Activated CD4-positive, alpha-beta T cell treated with anti-CD3 and anti-CD28 coated beads, Interleukin-2, amount 10 ng/mL, durations not matched to agents 7 days and 5 days (primary cell): ENCODE measurements at regions of chr14 and their contacts with region 1.

Region 1: DNA sequence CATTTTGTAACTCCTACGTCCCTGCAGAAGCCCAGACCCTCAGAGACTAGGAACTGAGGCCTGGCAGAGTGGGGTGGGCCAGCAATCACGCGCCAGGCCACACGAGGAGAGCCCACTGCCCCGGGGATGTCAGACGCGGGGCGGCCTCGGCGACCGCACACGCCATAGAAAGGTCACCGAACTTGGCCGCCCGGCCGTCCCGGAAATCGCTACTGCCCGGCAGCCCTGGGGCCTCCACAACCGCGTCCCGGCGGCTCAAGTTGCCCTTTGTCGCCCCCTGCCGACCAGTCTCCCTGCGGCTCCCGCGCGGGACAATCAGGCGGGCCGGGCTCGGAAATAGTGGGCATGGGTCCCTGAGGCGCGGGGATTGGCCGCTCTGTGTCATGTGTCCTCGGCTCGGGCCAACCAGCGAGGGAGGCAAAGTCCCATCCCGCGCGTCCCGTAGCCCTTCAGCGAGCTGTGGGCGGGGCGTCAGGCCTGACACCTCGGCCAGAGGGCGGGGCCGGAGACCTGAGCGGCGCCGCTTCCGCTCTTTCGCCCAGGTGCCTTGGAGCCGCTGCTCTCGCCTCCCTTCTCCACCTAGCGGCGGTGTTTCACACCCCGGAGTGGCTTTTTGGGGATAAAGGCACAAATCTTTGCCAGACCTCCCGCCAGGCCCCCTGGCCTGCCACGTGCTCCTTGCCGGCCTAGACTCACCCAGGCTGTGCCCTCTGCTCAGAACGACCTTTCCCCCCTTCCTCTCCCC is 33.4 kb upstream of the DEGS2 start:
- DNase-seq: peak; percentile 100
- H3K4me3 Mint-ChIP-seq: peak overlapping the region; percentile 59
- H3K27ac Mint-ChIP-seq: peak overlapping the region; percentile 95
- H3K4me1 Mint-ChIP-seq: peaks cover 12% of the 10 kb centered on the region
- H3K27me3 Mint-ChIP-seq: no peaks in the 10 kb centered on the region

Region 2: GRCh38 chr14:99976666-99977065 is 216.2 kb before region 1 on chr14:
- CTCF ChIA-PET with region 1: interaction called, 12 read pairs
- POLR2A ChIA-PET with region 1: no interaction called
- DNase-seq: no peak
- H3K4me3 Mint-ChIP-seq: no peak overlapping the region
- H3K27ac Mint-ChIP-seq: no peak overlapping the region
- H3K4me1 Mint-ChIP-seq: peaks cover 15% of the 10 kb centered on the region
- H3K27me3 Mint-ChIP-seq: no peaks in the 10 kb centered on the region

Region 3: DNA sequence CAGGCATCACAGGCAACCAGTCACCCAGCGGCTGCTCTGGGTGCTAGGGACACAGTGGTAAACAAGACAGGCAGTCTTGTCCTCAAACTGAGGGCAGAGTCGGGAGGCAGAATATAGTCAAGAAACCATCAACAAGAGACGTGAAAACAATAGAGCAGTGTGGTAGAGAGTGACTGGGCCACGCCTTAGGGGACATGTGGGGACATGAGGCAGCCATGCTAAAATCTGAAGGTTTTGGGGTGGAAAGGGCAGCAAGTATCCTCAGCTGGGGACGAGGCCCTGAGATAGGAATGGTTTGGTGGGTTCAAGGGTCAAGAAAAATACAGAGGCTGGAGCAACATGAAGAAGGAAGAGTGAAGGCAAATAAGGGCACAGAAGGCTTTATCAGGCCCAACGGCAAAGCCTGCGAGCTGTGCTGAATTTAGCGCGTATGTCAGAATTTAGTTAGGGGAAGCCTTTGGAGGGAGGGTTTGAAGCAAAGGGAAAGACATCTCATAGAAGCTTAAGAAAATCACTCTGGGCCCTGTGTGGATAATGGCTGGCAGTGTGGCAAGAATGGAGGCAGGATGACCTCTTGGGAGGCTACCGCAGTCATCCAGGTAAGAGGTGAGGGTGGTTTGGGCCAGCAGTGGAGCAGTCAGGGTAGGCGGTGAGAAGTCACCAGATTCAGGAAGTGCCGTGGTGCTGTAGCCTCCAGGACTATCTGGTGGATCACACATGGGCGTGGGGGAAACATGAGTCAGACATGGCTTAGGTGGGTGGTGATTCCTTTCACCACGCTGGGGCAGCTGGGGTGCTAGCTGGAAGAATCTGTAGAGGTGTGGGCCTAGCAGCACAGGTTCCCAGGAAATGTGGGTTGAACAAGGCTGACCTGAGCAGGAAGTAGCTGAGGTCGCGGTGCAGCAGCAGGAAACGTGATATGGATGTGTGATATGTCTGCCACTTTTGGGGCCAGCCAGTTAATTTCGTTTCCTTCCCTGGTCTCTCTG is 124.6 kb before region 1 on chr14:
- CTCF ChIA-PET with region 1: interaction called, 27 read pairs
- POLR2A ChIA-PET with region 1: no interaction called
- DNase-seq: peak; percentile 92
- H3K4me3 Mint-ChIP-seq: peak overlapping the region; percentile 92
- H3K27ac Mint-ChIP-seq: peak overlapping the region; percentile 98
- H3K4me1 Mint-ChIP-seq: peaks cover 41% of the 10 kb centered on the region
- H3K27me3 Mint-ChIP-seq: no peaks in the 10 kb centered on the region

Region 4: DNA sequence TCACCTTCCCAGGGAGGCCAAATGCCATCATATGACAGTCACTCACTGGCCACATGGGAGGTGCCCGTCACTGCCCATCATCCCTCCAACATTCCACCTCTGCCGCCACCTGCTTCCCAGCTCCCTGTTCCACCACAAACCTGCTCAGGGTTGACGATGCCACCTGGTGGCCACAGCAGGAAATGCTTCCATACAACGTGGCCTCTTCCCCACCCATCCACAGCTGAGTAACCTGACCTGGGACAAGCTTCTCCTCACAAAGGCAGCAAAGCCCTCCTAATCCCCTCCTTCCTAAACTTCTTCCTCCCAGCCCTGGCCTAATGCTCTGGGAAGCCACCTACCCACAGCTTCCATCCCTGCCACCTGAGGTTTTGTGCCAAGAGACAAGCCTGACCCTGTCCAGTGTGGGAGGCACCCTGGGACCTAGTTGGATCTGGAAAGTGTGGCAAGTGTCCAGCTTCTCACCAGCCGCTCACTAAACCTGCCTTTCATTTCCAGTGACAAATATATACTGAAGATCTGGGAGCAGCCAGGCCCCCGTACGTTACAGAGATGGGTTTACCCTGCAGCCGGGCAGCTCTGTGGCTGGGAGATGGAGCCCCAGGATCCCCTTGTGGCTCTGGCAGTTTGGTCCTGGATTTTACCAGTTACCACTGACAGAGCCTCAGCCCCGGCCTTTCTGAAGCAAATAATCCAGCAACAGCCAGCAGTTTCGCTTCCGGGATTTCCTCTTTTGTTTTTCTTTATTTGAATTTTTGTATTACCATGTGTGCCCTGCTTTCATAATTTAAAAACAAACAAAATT is 37.6 kb before region 1 on chr14:
- CTCF ChIA-PET with region 1: interaction called, 16 read pairs
- POLR2A ChIA-PET with region 1: interaction called, 3 read pairs
- DNase-seq: no peak
- H3K4me3 Mint-ChIP-seq: no peak overlapping the region
- H3K27ac Mint-ChIP-seq: peak overlapping the region; percentile 46
- H3K4me1 Mint-ChIP-seq: peaks cover 4% of the 10 kb centered on the region
- H3K27me3 Mint-ChIP-seq: peaks cover 31% of the 10 kb centered on the region

Region 5: GRCh38 chr14:100213956-100214774 is 21.3 kb after region 1 on chr14:
- CTCF ChIA-PET with region 1: interaction called, 55 read pairs
- POLR2A ChIA-PET with region 1: no interaction called
- DNase-seq: peak; percentile 91
- H3K4me3 Mint-ChIP-seq: peak overlapping the region; percentile 80
- H3K27ac Mint-ChIP-seq: peak overlapping the region; percentile 93
- H3K4me1 Mint-ChIP-seq: peaks cover 45% of the 10 kb centered on the region
- H3K27me3 Mint-ChIP-seq: peaks cover 3% of the 10 kb centered on the region

Region 6: DNA sequence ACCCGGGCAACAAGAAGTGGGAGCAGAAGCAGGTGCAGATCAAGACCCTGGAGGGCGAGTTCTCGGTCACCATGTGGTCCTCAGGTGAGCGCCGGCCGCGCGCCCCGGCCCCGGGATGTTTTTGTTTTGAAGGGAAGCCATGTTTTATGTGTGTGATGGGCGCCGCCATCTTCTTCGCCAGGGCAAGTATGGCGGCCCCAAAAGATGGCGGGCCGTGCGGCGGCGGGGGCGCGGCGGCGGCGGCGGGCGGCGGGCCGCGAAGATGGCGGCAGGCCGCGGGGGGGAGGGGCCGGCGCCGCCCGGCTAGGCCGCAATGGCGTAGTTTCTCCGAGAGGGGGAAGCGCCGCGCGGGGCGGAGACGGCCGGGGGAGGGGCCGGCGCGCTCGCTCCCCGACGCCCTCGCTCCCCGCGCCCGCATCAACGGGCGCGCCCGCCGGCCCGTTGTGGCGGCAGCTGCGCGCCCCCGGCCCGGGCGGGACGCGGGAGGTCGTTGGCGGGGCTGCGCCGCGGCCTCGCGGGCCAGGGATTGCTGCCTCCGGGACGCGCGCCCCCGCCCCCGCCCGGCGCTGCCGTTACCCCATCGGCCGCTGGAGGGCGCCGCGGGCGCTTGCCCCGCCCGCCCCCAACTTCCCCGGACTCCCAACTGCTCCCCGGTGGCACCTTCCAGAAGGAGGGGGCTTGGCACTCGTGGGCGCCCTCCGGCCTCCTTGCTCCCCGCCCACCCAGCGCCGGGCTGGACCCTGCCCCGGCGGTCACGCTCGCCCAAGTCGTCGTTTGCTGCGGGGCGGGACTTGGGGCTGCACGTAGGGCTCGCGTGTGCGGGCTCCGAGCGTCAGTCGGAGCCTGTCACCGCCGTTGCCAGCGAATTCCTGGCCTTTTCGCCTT is 47.2 kb after region 1 on chr14:
- CTCF ChIA-PET with region 1: interaction called, 10 read pairs
- POLR2A ChIA-PET with region 1: no interaction called
- DNase-seq: peak; percentile 84
- H3K4me3 Mint-ChIP-seq: peak overlapping the region; percentile 94
- H3K27ac Mint-ChIP-seq: peak overlapping the region; percentile 92
- H3K4me1 Mint-ChIP-seq: peaks cover 52% of the 10 kb centered on the region
- H3K27me3 Mint-ChIP-seq: no peaks in the 10 kb centered on the region